ENCODE measurements at regions of chr10 and their contacts with region 1.

Region 1: GRCh38 chr10:85612833-85613232 is 753.8 kb downstream of the GRID1 start:
- DNase-seq: peak in 1 of 2 experiments; percentile 62
- H3K4me3 ChIP-seq: no peak overlapping the region
- H3K27ac ChIP-seq: no peak overlapping the region
- H3K4me1 ChIP-seq: no peaks in the 10 kb centered on the region
- H3K27me3 ChIP-seq: no peaks in the 10 kb centered on the region
- CTCF ChIP-seq: peak; percentile 5 to 45 (median 24); a peak in 3 of 4 replicates
- EP300 ChIP-seq: no peak
- POLR2A ChIP-seq: no peak
- RAD21 ChIP-seq: peak; percentile 19 to 33; a peak in 2 of 4 replicates

Region 2: DNA sequence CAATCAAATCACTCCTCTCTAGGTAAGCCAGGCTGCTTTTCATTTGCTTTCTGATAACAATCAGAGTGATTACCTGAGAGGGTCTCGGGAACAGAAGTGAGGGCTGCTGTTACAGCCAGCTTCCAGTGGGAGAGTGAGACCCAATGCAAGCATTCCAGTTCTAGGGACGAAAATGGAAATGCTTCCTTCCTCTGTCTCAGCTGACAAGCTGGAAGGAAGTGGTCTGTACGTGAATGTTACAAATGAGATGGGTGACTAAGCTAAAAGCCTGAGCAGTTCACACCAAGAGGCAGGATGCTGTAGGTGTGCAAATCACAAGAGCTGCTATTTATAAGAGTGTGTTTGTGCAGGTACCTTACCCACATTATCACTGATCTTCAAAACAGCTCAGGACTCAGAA is 18.6 kb before region 1 on chr10:
- CTCF ChIA-PET with region 1: interaction called, 19 read pairs
- POLR2A ChIA-PET with region 1: no interaction called
- DNase-seq: no peak
- H3K4me3 ChIP-seq: no peak overlapping the region
- H3K27ac ChIP-seq: no peak overlapping the region
- H3K4me1 ChIP-seq: peaks cover 0 to 2% (median 0%) of the 10 kb centered on the region in 4 experiments; a peak in 1 of 7 replicates
- H3K27me3 ChIP-seq: no peaks in the 10 kb centered on the region
- CTCF ChIP-seq: no peak
- EP300 ChIP-seq: no peak
- POLR2A ChIP-seq: no peak
- RAD21 ChIP-seq: no peak

Region 3: GRCh38 chr10:85623342-85623741 is 10.5 kb after region 1 on chr10:
- CTCF ChIA-PET with region 1: interaction called, 14 read pairs
- POLR2A ChIA-PET with region 1: no interaction called
- DNase-seq: no peak
- H3K4me3 ChIP-seq: no peak overlapping the region
- H3K27ac ChIP-seq: no peak overlapping the region
- H3K4me1 ChIP-seq: no peaks in the 10 kb centered on the region
- H3K27me3 ChIP-seq: no peaks in the 10 kb centered on the region
- CTCF ChIP-seq: no peak
- EP300 ChIP-seq: no peak
- POLR2A ChIP-seq: no peak
- RAD21 ChIP-seq: no peak

Region 4: GRCh38 chr10:85679710-85680109 is 66.9 kb after region 1 on chr10:
- CTCF ChIA-PET with region 1: no interaction called
- POLR2A ChIA-PET with region 1: no interaction called
- DNase-seq: no peak
- H3K4me3 ChIP-seq: no peak overlapping the region
- H3K27ac ChIP-seq: no peak overlapping the region
- H3K4me1 ChIP-seq: no peaks in the 10 kb centered on the region
- H3K27me3 ChIP-seq: no peaks in the 10 kb centered on the region
- CTCF ChIP-seq: no peak
- EP300 ChIP-seq: no peak
- POLR2A ChIP-seq: no peak
- RAD21 ChIP-seq: no peak

Measured in H1 (cell line).